ENCODE measurements at regions of chr11 and their contacts with region 1.

Region 1: GRCh38 chr11:133134314-133135173 is 397.8 kb downstream of the OPCML start:
- DNase-seq: peak; percentile 65 to 75 (median 70)
- H3K4me3 ChIP-seq: no peak overlapping the region
- H3K27ac ChIP-seq: no peak overlapping the region
- H3K4me1 ChIP-seq: no peaks in the 10 kb centered on the region
- H3K27me3 ChIP-seq: peaks cover 0 to 16% (median 9%) of the 10 kb centered on the region in 5 experiments

Region 2: GRCh38 chr11:133146697-133147306 is 12.3 kb after region 1 on chr11:
- CTCF ChIA-PET with region 1: interaction called, 12 read pairs
- POLR2A ChIA-PET with region 1: no interaction called
- DNase-seq: no peak
- H3K4me3 ChIP-seq: no peak overlapping the region
- H3K27ac ChIP-seq: no peak overlapping the region
- H3K4me1 ChIP-seq: no peaks in the 10 kb centered on the region
- H3K27me3 ChIP-seq: peaks cover 0 to 37% (median 3%) of the 10 kb centered on the region in 5 experiments

Region 3: GRCh38 chr11:133156986-133157745 is 22.6 kb after region 1 on chr11:
- CTCF ChIA-PET with region 1: interaction called, 25 read pairs
- POLR2A ChIA-PET with region 1: no interaction called
- DNase-seq: peak; percentile 41 to 78 (median 62)
- H3K4me3 ChIP-seq: no peak overlapping the region
- H3K27ac ChIP-seq: no peak overlapping the region
- H3K4me1 ChIP-seq: peaks cover 0 to 6% (median 2%) of the 10 kb centered on the region in 4 experiments
- H3K27me3 ChIP-seq: peaks cover 2 to 53% (median 15%) of the 10 kb centered on the region in 5 experiments

Region 4: GRCh38 chr11:133175103-133175502 is 40.6 kb after region 1 on chr11:
- CTCF ChIA-PET with region 1: interaction called, 11 read pairs
- POLR2A ChIA-PET with region 1: no interaction called
- DNase-seq: peak in 2 of 3 donors; percentile 41 to 69
- H3K4me3 ChIP-seq: no peak overlapping the region
- H3K27ac ChIP-seq: no peak overlapping the region
- H3K4me1 ChIP-seq: peaks cover 0 to 7% (median 1%) of the 10 kb centered on the region in 4 experiments
- H3K27me3 ChIP-seq: peaks cover 0 to 4% (median 0%) of the 10 kb centered on the region in 5 experiments

Region 5: DNA sequence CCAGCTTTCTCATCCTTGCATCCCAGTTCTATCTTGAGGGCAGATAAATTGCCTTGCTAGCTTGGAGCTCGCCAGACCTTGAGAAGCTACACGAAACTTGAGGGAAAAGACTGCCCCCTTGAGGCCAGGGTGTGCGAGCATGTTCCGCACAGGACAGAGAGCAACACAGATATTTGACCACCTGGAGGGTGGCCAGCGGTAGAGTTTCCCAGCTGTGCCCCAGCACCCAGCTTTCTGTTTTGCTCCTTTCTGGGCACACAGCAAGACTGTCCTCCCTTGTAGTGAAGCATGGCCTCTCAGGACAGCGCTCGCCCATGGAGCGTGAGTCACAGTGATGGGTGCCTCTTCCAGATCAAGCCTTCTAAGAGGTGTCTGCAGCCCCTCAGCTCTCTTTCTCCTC is 687.2 kb after region 1 on chr11:
- CTCF ChIA-PET with region 1: interaction called, 15 read pairs
- POLR2A ChIA-PET with region 1: no interaction called
- DNase-seq: peak; percentile 36 to 58 (median 49)
- H3K4me3 ChIP-seq: no peak overlapping the region
- H3K27ac ChIP-seq: no peak overlapping the region
- H3K4me1 ChIP-seq: no peaks in the 10 kb centered on the region
- H3K27me3 ChIP-seq: peaks cover 0 to 6% (median 2%) of the 10 kb centered on the region in 5 experiments

Region 6: DNA sequence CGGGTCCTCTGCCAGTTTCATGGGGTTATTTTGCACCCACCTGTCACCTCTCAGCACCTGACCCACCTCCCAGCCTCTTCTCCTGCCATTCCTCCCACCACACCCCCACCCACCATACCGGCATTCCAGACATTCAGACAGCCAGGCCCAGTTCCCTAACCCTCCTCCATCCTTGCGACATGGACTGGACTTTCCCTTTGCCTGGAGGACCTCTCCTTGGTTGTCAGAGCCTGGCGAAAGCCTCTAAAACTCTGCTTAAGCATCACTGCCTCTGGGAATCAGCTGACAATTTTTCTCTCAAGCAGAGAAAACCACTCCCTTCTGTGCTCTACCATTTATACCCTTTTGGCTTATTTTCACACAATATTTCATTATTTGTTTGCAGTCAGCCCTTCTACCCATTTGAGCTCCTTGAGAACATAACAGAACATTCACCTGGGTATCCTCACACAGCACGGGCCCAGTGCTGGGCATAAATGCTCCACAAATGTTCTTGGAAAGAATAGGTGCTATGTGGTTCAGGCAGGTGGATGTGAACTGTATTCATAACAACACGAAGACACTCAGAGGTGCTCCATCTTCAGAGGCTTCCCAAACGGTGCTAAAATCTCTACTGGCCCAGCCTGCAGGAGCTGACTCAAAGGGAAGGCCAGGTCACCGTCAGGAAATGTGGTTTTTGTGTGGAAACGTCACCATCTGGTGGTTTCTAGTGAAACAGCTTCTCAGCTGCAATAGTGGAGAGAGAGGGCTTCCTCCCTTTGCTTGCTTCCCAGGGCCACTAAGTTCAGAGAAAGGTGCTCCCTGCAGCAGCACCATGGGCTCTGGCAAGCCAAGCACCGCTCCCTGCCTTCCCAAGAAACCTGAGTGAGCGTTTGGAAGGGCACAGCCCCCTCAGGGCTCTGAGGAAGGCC is 700.4 kb after region 1 on chr11:
- CTCF ChIA-PET with region 1: interaction called, 30 read pairs
- POLR2A ChIA-PET with region 1: no interaction called
- DNase-seq: peak; percentile 69 to 85 (median 72)
- H3K4me3 ChIP-seq: no peak overlapping the region
- H3K27ac ChIP-seq: no peak overlapping the region
- H3K4me1 ChIP-seq: peaks cover 0 to 5% (median 1%) of the 10 kb centered on the region in 4 experiments
- H3K27me3 ChIP-seq: peaks cover 0 to 23% (median 4%) of the 10 kb centered on the region in 5 experiments

Measured in common myeloid progenitor, CD34-positive (primary cell).